ENCODE measurements at regions of chr2 and their contacts with region 1.

Region 1: DNA sequence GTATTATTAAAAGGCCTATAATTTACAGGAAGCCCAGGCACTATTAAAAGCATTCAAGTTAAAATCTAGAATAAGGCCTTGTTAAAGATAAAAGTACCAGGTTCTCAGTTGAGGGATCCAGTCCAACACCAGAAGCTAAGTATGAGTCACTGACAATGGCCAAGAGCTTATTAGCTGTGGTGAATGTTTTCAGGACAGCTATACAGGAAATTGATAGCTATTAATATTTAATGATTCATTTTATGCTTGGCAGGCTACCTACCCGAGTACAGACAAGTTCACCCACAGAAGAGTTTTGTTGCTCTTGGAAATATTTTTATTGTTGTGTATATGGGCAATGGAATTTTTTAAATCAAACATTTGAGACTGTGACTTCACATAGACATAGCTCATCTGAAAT is 729.6 kb upstream of the ZNF804A start:
- DNase-seq: peak; percentile 93
- ATAC-seq: peak; percentile 92
- H3K4me3 ChIP-seq: no peak overlapping the region
- H3K27ac ChIP-seq: peak overlapping the region; percentile 68
- H3K4me1 ChIP-seq: peaks cover 22% of the 10 kb centered on the region
- H3K27me3 ChIP-seq: no peaks in the 10 kb centered on the region
- CTCF ChIP-seq: no peak

Region 2: GRCh38 chr2:183292028-183292427 is 576.7 kb before region 1 on chr2:
- CTCF ChIA-PET with region 1: no interaction called
- POLR2A ChIA-PET with region 1: no interaction called
- intact Hi-C with region 1: loop called (anchors 10 kb)
- DNase-seq: no peak
- ATAC-seq: no peak
- H3K4me3 ChIP-seq: no peak overlapping the region
- H3K27ac ChIP-seq: no peak overlapping the region
- H3K4me1 ChIP-seq: peaks cover 3% of the 10 kb centered on the region; the same call in 1 of the 2 replicates
- H3K27me3 ChIP-seq: no peaks in the 10 kb centered on the region
- CTCF ChIP-seq: no peak

Region 3: GRCh38 chr2:183809287-183809803 is 59.4 kb before region 1 on chr2:
- CTCF ChIA-PET with region 1: no interaction called
- POLR2A ChIA-PET with region 1: no interaction called
- intact Hi-C with region 1: loop called (anchors 2 kb)
- DNase-seq: peak; percentile 70
- ATAC-seq: peak; percentile 19; the same call in 1 of the 2 replicates
- H3K4me3 ChIP-seq: no peak overlapping the region
- H3K27ac ChIP-seq: peak overlapping the region; percentile 46
- H3K4me1 ChIP-seq: peaks cover 48% of the 10 kb centered on the region
- H3K27me3 ChIP-seq: no peaks in the 10 kb centered on the region
- CTCF ChIP-seq: no peak

Region 4: GRCh38 chr2:183993052-183993451 is 124.3 kb after region 1 on chr2:
- CTCF ChIA-PET with region 1: no interaction called
- POLR2A ChIA-PET with region 1: no interaction called
- intact Hi-C with region 1: loop called (anchors 1 kb)
- DNase-seq: peak; percentile 59
- ATAC-seq: peak; percentile 35
- H3K4me3 ChIP-seq: no peak overlapping the region
- H3K27ac ChIP-seq: peak overlapping the region; percentile 68
- H3K4me1 ChIP-seq: peaks cover 68% of the 10 kb centered on the region
- H3K27me3 ChIP-seq: no peaks in the 10 kb centered on the region
- CTCF ChIP-seq: no peak

Region 5: DNA sequence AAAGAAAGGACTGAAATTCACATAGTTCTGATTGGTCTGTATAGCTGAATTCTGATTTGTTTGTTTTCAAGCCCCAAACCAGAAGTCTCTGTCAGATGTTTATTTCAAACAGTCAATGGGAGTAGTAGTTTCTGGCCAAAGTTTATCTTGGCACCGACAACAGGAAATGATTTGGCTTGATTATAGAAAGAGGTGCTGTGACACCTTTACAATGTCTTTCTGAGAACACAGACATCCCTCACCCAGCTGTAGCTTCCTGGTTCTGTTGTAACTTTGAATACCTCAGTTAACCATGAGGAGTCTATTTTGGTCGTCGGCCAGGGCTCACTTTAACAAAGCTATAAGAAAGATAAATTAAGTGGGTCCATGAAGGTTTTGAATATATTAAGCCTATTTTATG is 184.6 kb after region 1 on chr2:
- CTCF ChIA-PET with region 1: no interaction called
- POLR2A ChIA-PET with region 1: no interaction called
- intact Hi-C with region 1: loop called (anchors 1 kb)
- DNase-seq: peak; percentile 62
- ATAC-seq: peak; percentile 76
- H3K4me3 ChIP-seq: no peak overlapping the region
- H3K27ac ChIP-seq: no peak overlapping the region
- H3K4me1 ChIP-seq: peaks cover 9% of the 10 kb centered on the region
- H3K27me3 ChIP-seq: no peaks in the 10 kb centered on the region
- CTCF ChIP-seq: no peak

Region 6: GRCh38 chr2:184118004-184118403 is 249.3 kb after region 1 on chr2:
- CTCF ChIA-PET with region 1: no interaction called
- POLR2A ChIA-PET with region 1: no interaction called
- intact Hi-C with region 1: loop called (anchors 5 kb)
- DNase-seq: peak; percentile 11
- ATAC-seq: peak; percentile 64
- H3K4me3 ChIP-seq: peak overlapping the region; percentile 18; the same call in 1 of the 2 replicates
- H3K27ac ChIP-seq: no peak overlapping the region
- H3K4me1 ChIP-seq: peaks cover 8% of the 10 kb centered on the region
- H3K27me3 ChIP-seq: no peaks in the 10 kb centered on the region
- CTCF ChIP-seq: no peak